B cell (primary cell): ENCODE measurements at regions of chr5 and their contacts with region 1.

Region 1: GRCh38 chr5:75049456-75050351 is 2.7 kb downstream of the GCNT4 start:
- DNase-seq: peak; percentile 56
- ATAC-seq: peak; percentile 43
- H3K4me3 ChIP-seq: no peak overlapping the region
- H3K4me3 Mint-ChIP-seq: no peak overlapping the region
- H3K27ac ChIP-seq: no peak overlapping the region
- H3K27ac Mint-ChIP-seq: no peak overlapping the region
- H3K4me1 ChIP-seq: peaks cover 11 to 13% of the 10 kb centered on the region in 2 donors
- H3K4me1 Mint-ChIP-seq: peaks cover 12% of the 10 kb centered on the region
- H3K27me3 ChIP-seq: peaks cover 0 to 42% (median 8%) of the 10 kb centered on the region in 4 experiments
- H3K27me3 Mint-ChIP-seq: peaks cover 50% of the 10 kb centered on the region
- CTCF ChIP-seq: peak; percentile 73

Region 2: GRCh38 chr5:75265731-75266130 is 216.0 kb after region 1 on chr5:
- CTCF ChIA-PET with region 1: interaction called, 3 read pairs
- POLR2A ChIA-PET with region 1: no interaction called
- intact Hi-C with region 1: loop called (anchors 2 kb)
- DNase-seq: no peak
- ATAC-seq: no peak
- H3K4me3 ChIP-seq: no peak overlapping the region
- H3K4me3 Mint-ChIP-seq: no peak overlapping the region
- H3K27ac ChIP-seq: no peak overlapping the region
- H3K27ac Mint-ChIP-seq: no peak overlapping the region
- H3K4me1 ChIP-seq: no peaks in the 10 kb centered on the region
- H3K4me1 Mint-ChIP-seq: no peaks in the 10 kb centered on the region
- H3K27me3 ChIP-seq: peaks cover 0 to 5% (median 0%) of the 10 kb centered on the region in 4 experiments
- H3K27me3 Mint-ChIP-seq: peaks cover 11% of the 10 kb centered on the region
- CTCF ChIP-seq: no peak